Activated CD4-positive, alpha-beta T cell treated with anti-CD3 and anti-CD28 coated beads for 36 hours (primary cell): ENCODE measurements at regions of chr16 and their contacts with region 1.

Region 1: GRCh38 chr16:11757671-11758545 is 15.3 kb upstream of the TXNDC11 start:
- DNase-seq: no peak
- ATAC-seq: no peak
- H3K4me3 Mint-ChIP-seq: no peak overlapping the region
- H3K27ac Mint-ChIP-seq: no peak overlapping the region
- H3K4me1 Mint-ChIP-seq: no peaks in the 10 kb centered on the region
- H3K27me3 Mint-ChIP-seq: no peaks in the 10 kb centered on the region

Region 2: GRCh38 chr16:11836650-11837244 is 78.8 kb after region 1 on chr16:
- CTCF ChIA-PET with region 1: no interaction called
- POLR2A ChIA-PET with region 1: interaction called, 3 read pairs
- intact Hi-C with region 1: loop called in 1 of 2 experiments (anchors 5 kb)
- DNase-seq: no peak
- ATAC-seq: no peak
- H3K4me3 Mint-ChIP-seq: no peak overlapping the region
- H3K27ac Mint-ChIP-seq: no peak overlapping the region
- H3K4me1 Mint-ChIP-seq: no peaks in the 10 kb centered on the region
- H3K27me3 Mint-ChIP-seq: no peaks in the 10 kb centered on the region